Transverse colon (tissue), 4 donors: ENCODE measurements at regions of chr3 and their contacts with region 1.

Region 1: DNA sequence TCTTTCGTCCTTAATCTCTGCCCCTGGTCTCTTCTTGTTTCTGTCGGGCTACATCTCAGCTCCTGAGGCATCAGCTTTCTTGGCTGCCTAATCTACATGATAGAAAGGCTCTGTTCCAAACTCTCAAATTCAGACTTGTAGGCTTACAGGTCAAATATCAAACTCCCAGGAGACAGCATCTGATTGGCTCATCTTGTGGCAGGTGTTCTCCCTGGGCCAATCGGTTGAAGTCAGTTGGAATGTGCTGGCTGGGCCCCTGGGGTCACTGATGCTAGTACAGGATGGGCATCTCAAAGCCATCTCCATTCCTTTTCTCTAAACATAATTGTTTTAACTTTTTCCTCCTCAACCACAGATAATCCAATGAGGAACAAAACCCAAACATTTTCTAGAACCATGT is 198.7 kb downstream of the CNTN3 start:
- DNase-seq: no peak
- H3K4me3 ChIP-seq: no peak overlapping the region
- H3K27ac ChIP-seq: no peak overlapping the region
- H3K4me1 ChIP-seq: no peaks in the 10 kb centered on the region
- H3K27me3 ChIP-seq: no peaks in the 10 kb centered on the region
- CTCF ChIP-seq: no peak
- EP300 ChIP-seq: no peak
- POLR2A ChIP-seq: no peak

Region 2: DNA sequence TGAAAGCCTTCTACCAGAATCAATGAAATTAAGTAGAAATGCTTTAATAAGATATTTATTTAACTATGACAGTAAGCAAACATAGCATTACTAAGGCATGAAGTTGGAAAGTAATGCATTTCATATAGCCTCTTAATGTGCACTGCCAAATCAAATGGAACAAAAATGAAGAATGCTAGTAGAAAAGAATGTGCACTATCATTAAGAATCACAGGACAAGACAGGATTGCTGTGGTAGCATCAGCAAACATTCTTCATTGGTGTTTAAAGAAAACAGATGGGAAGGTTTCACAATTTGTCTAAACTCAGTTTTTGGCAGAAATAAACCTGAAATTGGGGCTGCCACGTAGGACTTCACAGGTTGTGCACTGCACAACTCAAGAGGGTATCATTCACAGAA is 29.8 kb after region 1 on chr3:
- in situ Hi-C with region 1: no loop called
- intact Hi-C with region 1: loop called (anchors 1 kb)
- DNase-seq: no peak
- H3K4me3 ChIP-seq: no peak overlapping the region
- H3K27ac ChIP-seq: no peak overlapping the region
- H3K4me1 ChIP-seq: no peaks in the 10 kb centered on the region
- H3K27me3 ChIP-seq: no peaks in the 10 kb centered on the region
- CTCF ChIP-seq: no peak
- EP300 ChIP-seq: no peak
- POLR2A ChIP-seq: no peak